ENCODE measurements at regions of chr2 and their contacts with region 1.

Region 1: DNA sequence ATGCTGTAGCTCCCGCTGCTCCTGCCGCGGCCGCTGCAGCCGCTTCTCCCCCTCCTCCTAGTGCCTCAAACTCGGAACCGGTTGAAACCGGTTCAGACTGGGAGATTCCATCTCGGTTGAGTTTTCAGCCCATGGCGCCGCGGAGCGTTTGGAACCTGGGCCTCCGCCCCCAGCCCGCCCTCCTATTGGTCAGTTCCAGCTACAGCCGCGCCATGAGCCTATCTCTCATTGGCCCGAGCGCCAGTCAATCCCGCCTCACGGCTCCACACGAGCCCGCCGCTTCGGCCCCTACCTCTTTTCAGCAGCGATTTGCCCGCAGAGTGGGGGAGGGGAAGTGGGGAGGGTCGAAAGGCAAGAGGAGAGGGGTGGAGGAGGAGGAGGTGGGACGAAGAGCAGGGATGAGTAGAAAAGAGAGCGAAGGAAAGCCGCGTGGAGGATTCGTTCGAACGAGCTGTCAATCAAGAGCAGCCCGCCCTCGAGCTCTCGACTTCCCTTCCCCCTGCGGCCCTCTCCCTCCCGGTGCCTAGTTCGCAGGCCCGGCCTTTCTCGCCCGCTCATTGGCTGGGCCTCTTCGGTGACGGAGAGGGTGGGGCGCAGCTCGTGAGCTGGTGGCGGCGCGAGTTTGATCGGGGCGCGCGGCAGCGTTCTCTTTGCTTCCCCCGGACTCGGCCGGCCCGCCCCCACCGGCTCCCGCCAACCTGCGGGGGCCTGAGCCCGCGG is at the start of gene XPO1:
- DNase-seq: peak; percentile 99
- H3K4me3 ChIP-seq: peak within 1 kb of the TSS; percentile 78 to 94
- H3K4me3 Mint-ChIP-seq: peak within 1 kb of the TSS; percentile 92 to 100 (median 98)
- H3K27ac ChIP-seq: peak within 1 kb of the TSS; percentile 96
- H3K27ac Mint-ChIP-seq: peak within 1 kb of the TSS; percentile 99 to 100 (median 100)
- H3K4me1 ChIP-seq: peaks cover 36% of the 10 kb centered on the region
- H3K4me1 Mint-ChIP-seq: peaks cover 23 to 50% (median 29%) of the 10 kb centered on the region in 4 donors
- H3K27me3 ChIP-seq: no peaks in the 10 kb centered on the region
- H3K27me3 Mint-ChIP-seq: peaks cover 0 to 2% of the 10 kb centered on the region in 2 donors
- total RNA-seq, gene XPO1: 174 to 180 TPM

Region 2: GRCh38 chr2:60881047-60881932 is 657.1 kb before region 1 on chr2 and contains the start of gene REL:
- CTCF ChIA-PET with region 1: no interaction called
- POLR2A ChIA-PET with region 1: interaction called, 7 read pairs
- intact Hi-C with region 1: loop called (anchors 5 kb)
- DNase-seq: peak; percentile 88 to 91 (median 89)
- H3K4me3 ChIP-seq: peak within 1 kb of the TSS; percentile 96 to 100
- H3K4me3 Mint-ChIP-seq: peak within 1 kb of the TSS; percentile 92 to 100 (median 96)
- H3K27ac ChIP-seq: peak within 1 kb of the TSS; percentile 100
- H3K27ac Mint-ChIP-seq: peak within 1 kb of the TSS; percentile 91 to 100 (median 99)
- H3K4me1 ChIP-seq: peaks cover 33% of the 10 kb centered on the region
- H3K4me1 Mint-ChIP-seq: peaks cover 14 to 41% (median 31%) of the 10 kb centered on the region in 4 donors
- H3K27me3 ChIP-seq: no peaks in the 10 kb centered on the region
- H3K27me3 Mint-ChIP-seq: no peaks in the 10 kb centered on the region
- total RNA-seq, gene REL: 26.5 to 28.0 TPM

Region 3: GRCh38 chr2:61460163-61460562 is 78.2 kb before region 1 on chr2:
- CTCF ChIA-PET with region 1: no interaction called
- POLR2A ChIA-PET with region 1: interaction called, 11 read pairs
- intact Hi-C with region 1: no loop called
- DNase-seq: no peak
- H3K4me3 ChIP-seq: no peak overlapping the region
- H3K4me3 Mint-ChIP-seq: peak overlapping the region in 2 of 8 donors; percentile 24 to 32
- H3K27ac ChIP-seq: no peak overlapping the region
- H3K27ac Mint-ChIP-seq: peak overlapping the region in 2 of 7 donors; percentile 32 to 66
- H3K4me1 ChIP-seq: peaks cover 90% of the 10 kb centered on the region
- H3K4me1 Mint-ChIP-seq: peaks cover 51 to 94% (median 69%) of the 10 kb centered on the region in 4 donors
- H3K27me3 ChIP-seq: no peaks in the 10 kb centered on the region
- H3K27me3 Mint-ChIP-seq: no peaks in the 10 kb centered on the region

Region 4: GRCh38 chr2:61512768-61513398 is 25.5 kb before region 1 on chr2:
- CTCF ChIA-PET with region 1: no interaction called
- POLR2A ChIA-PET with region 1: interaction called, 16 read pairs
- intact Hi-C with region 1: no loop called
- DNase-seq: no peak
- H3K4me3 ChIP-seq: no peak overlapping the region
- H3K4me3 Mint-ChIP-seq: no peak overlapping the region
- H3K27ac ChIP-seq: no peak overlapping the region
- H3K27ac Mint-ChIP-seq: peak overlapping the region in 6 of 7 donors; percentile 6 to 88 (median 50)
- H3K4me1 ChIP-seq: peaks cover 14% of the 10 kb centered on the region
- H3K4me1 Mint-ChIP-seq: peaks cover 14 to 35% (median 24%) of the 10 kb centered on the region in 4 donors
- H3K27me3 ChIP-seq: no peaks in the 10 kb centered on the region
- H3K27me3 Mint-ChIP-seq: no peaks in the 10 kb centered on the region

Region 5: DNA sequence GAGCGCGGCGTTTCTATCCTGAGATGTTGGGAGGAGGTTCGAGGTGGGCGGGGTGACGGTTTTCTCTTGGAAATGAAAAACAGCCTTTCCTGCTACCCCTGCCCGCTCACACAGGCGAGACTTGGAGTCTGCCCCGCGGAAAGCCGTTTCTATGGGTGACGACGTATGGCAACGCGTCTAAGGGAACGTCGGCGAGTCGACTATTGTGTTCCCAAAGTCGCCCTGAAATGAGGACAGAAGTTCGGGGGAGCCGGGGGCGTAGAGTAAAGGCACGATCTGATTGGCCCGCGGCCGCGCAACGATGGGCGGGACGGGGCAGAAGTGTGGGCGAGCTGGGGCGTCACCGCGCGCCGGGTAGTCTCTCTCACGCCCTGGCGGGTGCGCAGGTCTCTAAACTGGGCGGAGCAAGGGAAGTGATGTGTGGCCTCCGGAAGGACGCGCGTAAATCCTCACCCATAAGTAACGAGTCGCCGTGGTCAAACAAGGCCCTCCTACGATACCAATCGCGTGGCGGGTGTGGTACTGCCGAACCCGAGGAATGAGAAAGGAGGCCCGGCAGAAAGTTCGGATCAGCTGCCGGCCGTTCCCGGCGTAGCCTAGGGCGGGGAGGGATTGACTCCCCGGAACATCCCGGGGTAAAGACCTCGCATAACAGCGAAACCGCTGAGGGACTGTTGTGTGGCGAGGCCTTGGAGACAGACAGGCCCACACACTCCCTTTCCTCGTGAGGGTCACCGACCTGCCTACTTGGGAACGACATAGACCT is 225.9 kb after region 1 on chr2:
- CTCF ChIA-PET with region 1: no interaction called
- POLR2A ChIA-PET with region 1: interaction called, 15 read pairs
- intact Hi-C with region 1: loop called (anchors 1 kb)
- DNase-seq: peak; percentile 95 to 98 (median 96)
- H3K4me3 ChIP-seq: peak overlapping the region; percentile 78 to 83
- H3K4me3 Mint-ChIP-seq: peak overlapping the region; percentile 93 to 98 (median 96)
- H3K27ac ChIP-seq: peak overlapping the region; percentile 94
- H3K27ac Mint-ChIP-seq: peak overlapping the region; percentile 95 to 99 (median 99)
- H3K4me1 ChIP-seq: peaks cover 15% of the 10 kb centered on the region
- H3K4me1 Mint-ChIP-seq: peaks cover 8 to 22% (median 15%) of the 10 kb centered on the region in 4 donors
- H3K27me3 ChIP-seq: no peaks in the 10 kb centered on the region
- H3K27me3 Mint-ChIP-seq: peaks cover 0 to 2% of the 10 kb centered on the region in 2 donors

Region 6: DNA sequence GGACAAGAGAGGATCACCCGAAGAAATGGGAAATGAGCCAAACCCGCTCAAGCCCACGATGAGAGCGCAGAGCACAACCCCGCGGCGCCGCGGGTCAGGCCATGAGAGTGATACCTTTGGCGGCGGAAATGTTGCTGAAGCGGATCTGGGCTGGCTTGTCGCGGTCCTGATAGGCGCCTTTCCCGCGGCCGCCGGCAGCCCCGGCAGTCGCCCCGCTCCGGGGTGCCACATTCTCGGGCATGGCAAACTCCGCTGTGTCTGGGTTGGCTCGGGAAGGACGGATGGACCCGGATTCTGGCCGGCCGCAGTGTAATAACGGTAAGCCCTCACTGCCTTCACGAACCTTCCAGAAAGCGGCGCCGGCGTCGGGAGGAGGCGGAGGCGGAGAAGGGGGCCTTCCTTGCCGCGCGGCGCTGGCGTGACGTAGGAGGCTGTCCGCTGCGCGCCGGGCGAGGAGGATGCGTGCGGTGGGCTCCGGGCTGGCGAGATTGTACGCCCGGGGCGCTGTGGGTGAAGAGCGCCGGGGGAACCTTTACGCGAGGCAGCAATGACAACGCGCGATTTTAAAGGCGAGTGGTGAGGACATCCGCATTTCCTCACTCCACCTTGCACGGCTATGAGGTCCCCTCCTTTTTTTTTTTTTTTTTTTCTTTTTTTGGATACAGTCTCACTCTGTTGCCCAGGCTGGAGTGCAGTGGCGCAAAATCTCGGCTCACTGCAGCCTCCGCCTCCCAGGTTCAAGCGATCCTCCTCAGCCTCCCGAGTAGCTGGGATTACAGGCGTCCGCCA is 350.1 kb after region 1 on chr2 and contains the start of gene CCT4:
- CTCF ChIA-PET with region 1: no interaction called
- POLR2A ChIA-PET with region 1: interaction called, 4 read pairs
- intact Hi-C with region 1: loop called (anchors 1 kb)
- DNase-seq: peak; percentile 88 to 97 (median 94)
- H3K4me3 ChIP-seq: peak within 1 kb of the TSS; percentile 84 to 86
- H3K4me3 Mint-ChIP-seq: peak within 1 kb of the TSS; percentile 96 to 100 (median 99)
- H3K27ac ChIP-seq: peak within 1 kb of the TSS; percentile 95
- H3K27ac Mint-ChIP-seq: peak within 1 kb of the TSS; percentile 97 to 100 (median 99)
- H3K4me1 ChIP-seq: peaks cover 28% of the 10 kb centered on the region
- H3K4me1 Mint-ChIP-seq: peaks cover 14 to 38% (median 22%) of the 10 kb centered on the region in 4 donors
- H3K27me3 ChIP-seq: no peaks in the 10 kb centered on the region
- H3K27me3 Mint-ChIP-seq: no peaks in the 10 kb centered on the region
- total RNA-seq, gene CCT4: 91.0 to 101 TPM

Measured in CD4-positive, alpha-beta memory T cell (primary cell).